Endothelial cell of umbilical vein (primary cell): ENCODE measurements at regions of chr13 and their contacts with region 1.

Region 1: DNA sequence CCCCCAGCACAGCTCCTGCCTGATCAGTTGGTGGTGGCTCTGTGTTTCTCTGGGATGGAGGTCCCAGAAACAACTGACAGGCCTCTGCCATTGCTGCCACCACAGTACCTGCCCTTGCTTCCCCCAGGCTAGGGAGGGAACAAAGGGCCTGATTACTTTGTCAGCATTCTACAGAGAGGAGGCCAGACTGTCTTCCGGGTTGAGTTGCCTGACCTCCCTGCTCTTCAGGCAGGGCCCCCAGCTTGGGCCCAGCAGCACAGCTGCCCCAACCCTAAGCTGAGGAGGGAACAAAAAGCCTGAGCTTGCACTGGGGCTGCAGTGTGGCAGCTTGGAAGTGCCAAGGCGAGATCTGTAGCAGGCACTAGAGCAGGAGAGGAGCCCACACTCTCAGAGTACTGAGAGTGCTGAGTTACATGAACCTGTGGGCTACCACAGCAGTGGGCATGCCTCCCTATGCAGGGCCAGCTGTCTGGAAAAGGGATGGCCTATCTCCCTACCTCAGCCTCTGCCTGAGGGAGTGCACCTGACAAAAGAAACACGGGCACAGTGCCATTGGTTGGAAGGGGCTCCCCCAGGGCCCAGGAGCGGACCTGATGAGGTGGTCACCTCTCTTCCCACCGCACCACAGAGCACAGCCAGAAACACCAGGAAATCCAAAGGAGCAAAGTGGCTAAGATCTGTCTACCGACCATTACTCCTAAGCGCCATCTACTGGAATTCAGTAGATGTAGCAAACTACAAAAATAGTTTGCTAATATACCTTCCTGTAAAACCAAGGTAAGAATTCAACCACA is 24.4 kb downstream of the SLC25A15 start:
- DNase-seq: peak; percentile 16
- H3K4me3 ChIP-seq: no peak overlapping the region
- H3K27ac ChIP-seq: no peak overlapping the region
- H3K4me1 ChIP-seq: no peaks in the 10 kb centered on the region
- H3K27me3 ChIP-seq: peaks cover 0 to 3% of the 10 kb centered on the region in 2 experiments
- CTCF ChIP-seq: peak; percentile 53 to 55
- POLR2A ChIP-seq: no peak

Region 2: DNA sequence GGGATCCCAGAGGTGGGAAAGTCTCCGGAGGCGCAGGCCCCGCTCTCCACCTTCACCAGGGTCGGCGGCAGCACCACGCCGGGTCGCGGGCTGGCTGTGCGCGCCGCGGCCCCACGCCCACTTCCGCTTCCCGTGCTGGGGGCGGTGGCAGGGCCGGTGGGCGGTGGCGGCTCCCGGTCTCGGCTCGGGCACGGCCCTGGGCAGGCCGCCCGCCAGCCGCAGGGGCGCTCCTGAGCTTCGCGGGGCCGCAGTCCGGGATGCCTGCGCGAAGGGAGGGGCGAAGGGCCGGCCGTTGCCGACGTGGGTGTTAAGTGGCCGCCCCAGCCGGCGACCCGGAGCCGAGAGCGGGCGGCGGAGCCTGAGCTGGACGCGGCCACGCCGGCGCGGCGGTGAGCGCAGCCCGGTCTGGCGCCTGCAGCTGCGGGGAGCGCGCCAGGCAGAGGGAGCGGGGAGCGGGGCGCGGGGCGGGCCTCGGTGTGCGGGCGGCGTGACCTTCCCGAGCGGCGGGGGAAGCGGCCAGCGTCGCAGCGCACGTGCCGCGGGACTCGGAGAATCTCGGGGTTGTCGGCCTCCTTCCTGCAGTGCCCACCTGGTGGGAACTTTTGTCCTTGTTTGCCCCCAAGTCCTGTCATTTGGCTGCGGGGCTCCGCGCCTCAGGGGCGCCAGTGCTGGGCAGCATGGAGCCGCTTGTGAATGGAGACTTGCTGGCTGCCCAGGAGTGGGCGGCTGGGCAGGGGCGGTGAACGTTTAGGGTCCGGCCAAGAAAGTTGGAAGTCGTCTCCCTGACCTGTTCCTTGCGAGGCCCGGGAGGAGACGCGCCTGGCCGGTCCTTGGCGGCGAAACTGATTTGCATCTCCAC is 24.4 kb before region 1 on chr13 and contains the start of gene SLC25A15:
- CTCF ChIA-PET with region 1: interaction called, 23 read pairs
- POLR2A ChIA-PET with region 1: no interaction called
- dilution Hi-C with region 1: no loop called
- intact Hi-C with region 1: no loop called
- DNase-seq: peak; percentile 82
- H3K4me3 ChIP-seq: peak within 1 kb of the TSS; percentile 57 to 66 (median 58)
- H3K27ac ChIP-seq: peak within 1 kb of the TSS; percentile 37
- H3K4me1 ChIP-seq: peaks cover 11% of the 10 kb centered on the region
- H3K27me3 ChIP-seq: no peaks in the 10 kb centered on the region
- CTCF ChIP-seq: peak; percentile 17 to 31
- POLR2A ChIP-seq: peak; percentile 77
- total RNA-seq, gene SLC25A15: 10.8 and 11.5 TPM in 2 replicates